Lower leg skin (tissue), 4 donors: ENCODE measurements at regions of chr1 and their contacts with region 1.

Region 1: GRCh38 chr1:50368179-50369012 is 54.8 kb downstream of the DMRTA2 start:
- DNase-seq: no peak
- H3K4me3 ChIP-seq: no peak overlapping the region
- CTCF ChIP-seq: peak in 1 of 3 donors; percentile 34
- POLR2A ChIP-seq: no peak

Region 2: DNA sequence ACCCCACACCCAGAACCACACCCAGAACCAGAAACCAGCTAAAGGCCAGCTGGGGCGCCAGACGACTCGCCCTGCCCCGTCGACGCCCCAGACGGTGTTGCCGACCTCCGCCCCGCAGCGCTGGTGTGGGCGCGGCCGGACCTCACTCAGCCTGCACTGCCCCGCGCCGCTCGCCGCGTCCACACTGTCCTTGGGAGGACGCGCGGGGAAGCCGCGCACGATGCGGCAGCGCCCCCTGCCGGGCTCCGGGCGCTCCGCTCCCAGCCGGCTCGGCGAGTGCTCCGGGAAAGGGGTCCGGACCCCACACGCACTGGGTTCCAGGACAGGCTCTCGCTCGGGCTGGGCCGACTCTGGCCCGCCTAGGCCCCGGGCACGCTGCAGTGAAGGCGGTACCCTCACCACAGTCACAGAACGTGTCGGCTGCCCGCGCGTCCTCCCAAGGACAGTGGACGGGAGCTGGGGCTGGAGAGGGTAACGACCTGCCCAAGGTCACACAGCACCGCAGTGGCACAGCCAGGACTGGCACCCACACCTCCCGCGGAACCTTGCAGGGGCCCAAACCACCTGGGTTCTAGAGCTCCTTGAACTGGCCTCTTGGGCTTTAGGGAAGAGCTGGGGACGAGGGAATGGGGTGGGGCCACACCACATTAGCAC is 35.3 kb before region 1 on chr1:
- intact Hi-C with region 1: no loop called
- DNase-seq: no peak
- H3K4me3 ChIP-seq: peak overlapping the region; percentile 21
- CTCF ChIP-seq: no peak
- POLR2A ChIP-seq: no peak

Region 3: DNA sequence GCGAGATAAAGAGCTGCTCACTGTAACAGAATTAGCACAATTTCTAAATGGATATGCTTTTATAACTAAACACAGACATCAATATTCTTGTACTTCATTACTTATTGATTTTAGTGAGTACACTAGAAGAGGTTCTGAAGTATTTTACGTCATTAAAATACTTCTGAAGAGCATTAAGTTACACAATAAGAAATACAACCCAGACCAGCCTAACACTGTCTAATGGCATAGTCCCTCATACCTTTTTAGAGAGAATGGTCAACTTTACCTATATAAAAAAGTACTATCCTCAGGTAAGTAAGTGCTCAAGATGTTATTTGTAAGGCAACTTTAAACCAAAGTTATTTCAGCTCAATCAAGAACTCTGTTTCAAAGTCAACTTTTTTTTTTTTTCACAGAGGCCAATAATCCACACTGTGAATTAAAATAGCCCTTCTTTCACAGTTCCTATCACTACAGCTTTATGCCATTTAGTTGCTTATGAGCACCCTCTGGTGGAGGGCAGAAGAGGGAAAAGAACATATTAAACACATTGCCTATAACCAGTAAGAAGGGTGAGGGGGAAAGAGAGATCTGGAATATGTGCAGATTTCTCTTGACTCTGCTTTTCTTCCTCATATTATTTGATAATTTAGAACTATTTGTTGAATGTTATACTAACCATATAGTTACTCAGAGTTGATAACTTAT is 236.9 kb after region 1 on chr1:
- intact Hi-C with region 1: loop called (anchors 10 kb)
- DNase-seq: no peak
- H3K4me3 ChIP-seq: no peak overlapping the region
- CTCF ChIP-seq: no peak
- POLR2A ChIP-seq: no peak